ENCODE measurements at regions of chr17 and their contacts with region 1.

Region 1: DNA sequence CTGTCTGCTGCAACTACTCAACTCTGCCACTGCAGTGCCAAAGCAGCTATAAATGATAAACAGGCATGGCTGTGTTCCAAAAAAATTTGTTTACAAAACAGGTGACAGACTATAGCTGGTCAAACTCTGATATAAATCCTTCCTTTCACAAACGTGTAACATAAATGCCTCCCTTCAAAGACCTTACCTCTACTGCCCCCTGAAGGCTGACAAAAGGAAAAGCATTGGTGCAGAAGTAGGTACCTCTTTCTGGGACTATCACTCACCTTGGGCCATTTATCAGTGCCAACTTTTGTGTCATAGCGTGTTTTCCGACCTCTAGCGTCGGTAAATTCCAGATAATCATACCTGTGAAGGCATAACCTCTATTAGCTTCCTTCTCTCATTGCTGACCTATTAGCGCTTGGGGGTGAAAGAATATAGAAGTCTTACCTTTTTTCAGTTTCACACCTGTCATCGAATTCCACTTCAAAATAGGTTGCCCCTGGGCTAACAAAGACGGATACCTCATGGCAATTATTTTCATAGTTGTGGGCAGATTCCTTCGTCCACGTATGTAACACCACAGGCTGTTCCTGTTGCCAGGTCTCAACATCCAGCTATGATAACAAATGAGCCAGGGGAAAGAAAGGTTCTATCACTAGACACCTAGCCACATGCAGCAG is 67.9 kb downstream of the ZZEF1 start:
- DNase-seq: no peak
- H3K4me3 ChIP-seq: no peak overlapping the region
- H3K27ac ChIP-seq: no peak overlapping the region
- H3K4me1 ChIP-seq: no peaks in the 10 kb centered on the region
- H3K27me3 ChIP-seq: no peaks in the 10 kb centered on the region
- CTCF ChIP-seq: peak in 2 of 3 experiments; percentile 60 to 84; a peak in 3 of 4 replicates
- EP300 ChIP-seq: no peak
- POLR2A ChIP-seq: no peak
- RAD21 ChIP-seq: peak; percentile 66 to 72

Region 2: GRCh38 chr17:4054446-4054845 is 20.5 kb before region 1 on chr17:
- CTCF ChIA-PET with region 1: interaction called, 19 read pairs
- POLR2A ChIA-PET with region 1: no interaction called
- DNase-seq: no peak
- H3K4me3 ChIP-seq: no peak overlapping the region
- H3K27ac ChIP-seq: no peak overlapping the region
- H3K4me1 ChIP-seq: peaks cover 0 to 4% (median 0%) of the 10 kb centered on the region in 4 experiments; a peak in 2 of 7 replicates
- H3K27me3 ChIP-seq: no peaks in the 10 kb centered on the region
- CTCF ChIP-seq: no peak
- EP300 ChIP-seq: no peak
- POLR2A ChIP-seq: no peak
- RAD21 ChIP-seq: no peak

Region 3: GRCh38 chr17:4086041-4086483 is 11.1 kb after region 1 on chr17:
- CTCF ChIA-PET with region 1: interaction called, 14 read pairs
- POLR2A ChIA-PET with region 1: no interaction called
- DNase-seq: no peak
- H3K4me3 ChIP-seq: no peak overlapping the region
- H3K27ac ChIP-seq: no peak overlapping the region
- H3K4me1 ChIP-seq: no peaks in the 10 kb centered on the region
- H3K27me3 ChIP-seq: no peaks in the 10 kb centered on the region
- CTCF ChIP-seq: no peak
- EP300 ChIP-seq: no peak
- POLR2A ChIP-seq: no peak
- RAD21 ChIP-seq: no peak

Region 4: GRCh38 chr17:4105232-4105631 is 30.3 kb after region 1 on chr17:
- CTCF ChIA-PET with region 1: interaction called, 12 read pairs
- POLR2A ChIA-PET with region 1: no interaction called
- DNase-seq: no peak
- H3K4me3 ChIP-seq: no peak overlapping the region
- H3K27ac ChIP-seq: no peak overlapping the region
- H3K4me1 ChIP-seq: no peaks in the 10 kb centered on the region
- H3K27me3 ChIP-seq: no peaks in the 10 kb centered on the region
- CTCF ChIP-seq: no peak
- EP300 ChIP-seq: no peak
- POLR2A ChIP-seq: no peak
- RAD21 ChIP-seq: no peak